Calu3 (cell line): ENCODE measurements at regions of chr4 and their contacts with region 1.

Region 1: DNA sequence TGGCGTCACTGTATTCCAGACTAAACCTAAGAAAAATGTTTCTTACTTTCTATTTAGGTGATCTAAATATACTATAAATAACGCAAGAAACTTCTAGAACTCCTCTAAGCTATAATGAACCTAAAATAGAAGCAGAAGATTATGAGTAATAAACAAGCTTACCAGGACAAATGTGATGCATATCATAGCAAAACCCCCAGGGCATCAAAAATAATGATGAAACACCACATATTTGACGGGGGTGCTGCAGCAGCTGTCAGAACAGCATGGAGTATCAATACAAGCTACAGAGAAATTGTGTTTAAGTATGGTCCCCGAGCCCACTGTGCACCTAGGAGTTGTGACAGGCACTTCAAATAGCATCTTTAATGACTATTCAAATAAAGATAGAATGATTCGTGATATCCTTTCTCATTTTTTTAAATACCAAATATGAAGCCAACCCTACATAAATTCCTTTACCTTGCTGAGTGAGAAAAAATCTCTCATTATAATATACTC is 337.3 kb downstream of the CENPC start:
- DNase-seq: no peak
- H3K4me3 Mint-ChIP-seq: no peak overlapping the region
- H3K27ac Mint-ChIP-seq: no peak overlapping the region
- H3K4me1 Mint-ChIP-seq: no peaks in the 10 kb centered on the region
- H3K27me3 Mint-ChIP-seq: no peaks in the 10 kb centered on the region
- CTCF ChIP-seq: no peak

Region 2: GRCh38 chr4:67229148-67229547 is 21.2 kb after region 1 on chr4:
- CTCF ChIA-PET with region 1: no interaction called
- intact Hi-C with region 1: loop called (anchors 2 kb)
- DNase-seq: no peak
- H3K4me3 Mint-ChIP-seq: no peak overlapping the region
- H3K27ac Mint-ChIP-seq: no peak overlapping the region
- H3K4me1 Mint-ChIP-seq: no peaks in the 10 kb centered on the region
- H3K27me3 Mint-ChIP-seq: no peaks in the 10 kb centered on the region
- CTCF ChIP-seq: no peak